GM12878 (cell line): ENCODE measurements at regions of chr3 and their contacts with region 1.

Region 1: DNA sequence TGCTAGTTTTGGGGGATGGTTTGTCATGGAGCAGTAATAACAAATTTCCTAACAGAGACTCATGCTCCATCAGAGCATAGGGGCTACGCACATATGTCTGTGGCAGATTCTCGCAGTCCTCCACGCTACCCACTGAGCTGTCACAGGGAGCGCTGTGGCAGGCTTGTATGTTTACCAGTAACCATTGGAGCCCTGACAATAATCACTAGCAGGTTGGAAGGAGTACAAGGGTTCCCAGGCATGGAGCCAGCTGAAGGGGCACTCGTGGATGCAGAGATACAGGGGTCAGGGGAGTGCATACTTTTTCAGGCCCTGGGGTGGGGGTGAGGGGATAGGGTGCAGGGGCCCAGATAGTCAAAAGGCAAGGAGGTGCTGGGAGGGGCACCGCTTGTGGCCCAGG is 7.9 kb upstream of the GP9 start:
- DNase-seq: no peak
- ATAC-seq: no peak
- H3K4me3 ChIP-seq: no peak overlapping the region
- H3K27ac ChIP-seq: no peak overlapping the region
- H3K4me1 ChIP-seq: no peaks in the 10 kb centered on the region
- H3K27me3 ChIP-seq: no peaks in the 10 kb centered on the region; a peak in 1 of 4 replicates
- CTCF ChIP-seq: no peak
- EP300 ChIP-seq: no peak
- POLR2A ChIP-seq: no peak
- RAD21 ChIP-seq: no peak

Region 2: DNA sequence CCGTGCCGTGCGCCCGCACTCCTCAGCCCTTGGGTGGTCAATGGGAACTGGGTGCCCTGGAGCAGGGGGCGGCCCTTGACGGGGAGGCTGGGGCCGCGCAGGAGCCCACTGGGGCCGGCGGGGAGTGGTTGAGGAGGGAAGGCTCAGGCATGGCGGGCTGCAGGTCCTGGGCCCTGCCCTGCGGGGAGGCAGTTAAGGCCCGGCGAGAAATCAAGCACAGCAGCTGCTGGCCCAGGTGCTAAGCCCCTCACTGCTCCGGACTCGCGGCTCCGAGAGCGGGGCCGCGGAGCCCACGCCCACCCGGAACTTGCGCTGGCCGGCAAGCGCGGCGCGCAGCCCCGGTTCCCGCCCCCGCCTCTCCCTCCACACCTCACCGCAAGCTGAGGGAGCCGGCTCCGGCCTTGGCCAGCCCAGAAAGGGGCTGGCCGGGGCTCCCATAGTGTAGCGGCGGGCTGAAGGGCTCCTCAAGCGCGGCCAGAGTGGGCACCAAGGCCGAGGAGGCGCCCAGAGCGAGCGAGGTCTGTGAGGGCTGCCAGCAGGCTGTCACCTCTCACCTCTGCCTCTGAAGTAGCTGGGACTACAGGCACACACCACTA is 15.7 kb after region 1 on chr3:
- CTCF ChIA-PET with region 1: interaction called, 43 read pairs
- POLR2A ChIA-PET with region 1: interaction called, 6 read pairs
- RAD21 ChIA-PET with region 1: interaction called, 9 read pairs
- SMC1A ChIA-PET with region 1: interaction called, 4 read pairs
- in situ Hi-C with region 1: no loop called
- intact Hi-C with region 1: no loop called
- DNase-seq: no peak
- ATAC-seq: peak; percentile 20
- H3K4me3 ChIP-seq: no peak overlapping the region
- H3K27ac ChIP-seq: no peak overlapping the region
- H3K4me1 ChIP-seq: no peaks in the 10 kb centered on the region
- H3K27me3 ChIP-seq: no peaks in the 10 kb centered on the region; a peak in 3 of 4 replicates
- CTCF ChIP-seq: no peak
- EP300 ChIP-seq: no peak
- POLR2A ChIP-seq: no peak
- RAD21 ChIP-seq: no peak

Region 3: DNA sequence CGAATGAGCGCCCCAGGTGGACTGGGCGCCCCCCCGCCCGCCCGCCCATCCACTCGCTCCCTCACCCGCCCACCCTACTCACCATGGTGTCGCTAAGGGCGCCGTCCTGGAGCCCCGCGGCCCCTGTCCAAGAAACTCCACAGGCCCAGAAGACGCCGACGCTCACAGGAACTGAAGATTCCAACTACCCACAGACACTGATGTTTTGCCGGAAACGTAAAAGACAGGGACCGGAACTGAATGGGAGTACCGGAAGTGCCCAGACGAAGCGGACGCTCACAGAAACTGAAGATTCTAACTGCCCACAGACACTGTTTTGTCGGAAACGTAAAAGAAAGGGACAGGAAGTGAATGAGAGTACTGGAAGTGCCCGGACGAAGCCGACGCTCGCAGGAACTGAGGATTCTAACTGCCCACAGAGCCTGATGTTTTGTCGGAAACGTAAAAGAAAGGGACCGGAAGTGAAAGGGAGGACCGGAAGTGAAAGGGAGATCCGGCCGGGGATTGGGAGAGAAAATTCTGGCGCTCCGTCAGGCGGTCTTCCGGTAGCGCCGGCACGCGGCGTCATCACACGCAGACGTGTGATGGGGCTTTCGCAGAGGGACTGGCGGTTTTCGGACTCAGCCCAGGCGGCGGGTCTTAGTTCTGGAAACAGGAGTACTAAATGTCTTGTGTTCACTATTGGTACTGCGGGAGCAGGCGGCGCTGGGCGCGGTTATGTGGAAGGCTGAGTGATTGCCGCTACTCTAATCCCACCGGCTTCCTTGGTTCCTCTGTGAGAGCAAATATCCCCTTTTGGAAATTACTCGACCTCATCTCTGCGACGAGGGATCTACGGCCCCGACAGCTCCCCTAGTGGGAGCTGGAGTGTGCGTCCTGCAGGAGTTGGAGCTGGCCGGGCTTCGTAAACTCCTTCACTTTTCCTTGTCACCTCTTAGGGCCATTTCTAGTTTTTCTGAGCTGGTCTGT is 108.5 kb after region 1 on chr3 and contains the start of gene ISY1:
- CTCF ChIA-PET with region 1: interaction called, 36 read pairs
- POLR2A ChIA-PET with region 1: interaction called, 3 read pairs
- RAD21 ChIA-PET with region 1: interaction called, 29 read pairs
- SMC1A ChIA-PET with region 1: interaction called, 20 read pairs
- in situ Hi-C with region 1: no loop called
- intact Hi-C with region 1: no loop called
- DNase-seq: peak; percentile 87
- ATAC-seq: peak; percentile 87
- H3K4me3 ChIP-seq: peak within 1 kb of the TSS; percentile 99
- H3K27ac ChIP-seq: peak within 1 kb of the TSS; percentile 100
- H3K4me1 ChIP-seq: peaks cover 4% of the 10 kb centered on the region
- H3K27me3 ChIP-seq: no peaks in the 10 kb centered on the region
- CTCF ChIP-seq: peak; percentile 79 to 86 (median 80)
- EP300 ChIP-seq: peak in 1 of 2 experiments; percentile 61; a peak in 2 of 4 replicates
- POLR2A ChIP-seq: peak; percentile 94
- RAD21 ChIP-seq: peak; percentile 54
- polyA plus RNA-seq, gene ISY1: 54.1 to 58.2 TPM

Region 4: GRCh38 chr3:129238945-129239706 is 186.5 kb after region 1 on chr3:
- CTCF ChIA-PET with region 1: interaction called, 220 read pairs
- POLR2A ChIA-PET with region 1: interaction called, 4 read pairs
- RAD21 ChIA-PET with region 1: interaction called, 88 read pairs
- SMC1A ChIA-PET with region 1: interaction called, 118 read pairs
- in situ Hi-C with region 1: loop called (anchors 5 kb)
- intact Hi-C with region 1: no loop called
- DNase-seq: no peak
- ATAC-seq: peak; percentile 81
- H3K4me3 ChIP-seq: no peak overlapping the region; the same call in 1 of the 2 replicates
- H3K27ac ChIP-seq: no peak overlapping the region
- H3K4me1 ChIP-seq: peaks cover 13% of the 10 kb centered on the region
- H3K27me3 ChIP-seq: no peaks in the 10 kb centered on the region
- CTCF ChIP-seq: no peak
- EP300 ChIP-seq: no peak
- POLR2A ChIP-seq: no peak
- RAD21 ChIP-seq: no peak